ENCODE measurements at regions of chr2 and their contacts with region 1.

Region 1: DNA sequence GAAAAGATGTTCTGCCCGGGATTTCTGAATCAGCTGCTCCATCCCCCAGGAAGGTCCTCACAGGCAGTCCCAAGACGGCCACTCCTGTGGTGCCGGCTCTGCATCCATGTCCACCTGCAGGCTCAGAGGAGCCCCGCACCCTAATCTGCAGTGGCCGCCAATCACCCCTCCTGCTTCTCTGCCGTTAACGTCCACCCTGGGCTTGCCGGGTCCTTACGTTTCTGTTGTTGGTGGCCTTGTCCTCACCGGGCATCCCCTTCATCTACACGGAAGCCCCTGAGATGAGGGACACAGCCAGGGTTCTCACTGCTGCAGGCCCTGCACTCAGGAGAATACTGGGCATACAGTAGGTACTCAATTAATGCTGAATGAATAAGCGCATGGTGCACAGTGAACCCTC is 131.5 kb upstream of the SNTG2 start:
- DNase-seq: no peak
- ATAC-seq: no peak
- H3K4me3 ChIP-seq: no peak overlapping the region
- H3K4me3 Mint-ChIP-seq: no peak overlapping the region
- H3K27ac ChIP-seq: no peak overlapping the region
- H3K27ac Mint-ChIP-seq: no peak overlapping the region
- H3K4me1 ChIP-seq: no peaks in the 10 kb centered on the region
- H3K4me1 Mint-ChIP-seq: no peaks in the 10 kb centered on the region
- H3K27me3 ChIP-seq: no peaks in the 10 kb centered on the region
- H3K27me3 Mint-ChIP-seq: peaks cover 3% of the 10 kb centered on the region
- CTCF ChIP-seq: no peak

Region 2: GRCh38 chr2:842151-842803 is 23.2 kb after region 1 on chr2:
- CTCF ChIA-PET with region 1: no interaction called
- POLR2A ChIA-PET with region 1: no interaction called
- intact Hi-C with region 1: no loop called
- DNase-seq: no peak
- ATAC-seq: no peak
- H3K4me3 ChIP-seq: no peak overlapping the region
- H3K4me3 Mint-ChIP-seq: no peak overlapping the region
- H3K27ac ChIP-seq: no peak overlapping the region
- H3K27ac Mint-ChIP-seq: no peak overlapping the region
- H3K4me1 ChIP-seq: no peaks in the 10 kb centered on the region
- H3K4me1 Mint-ChIP-seq: no peaks in the 10 kb centered on the region
- H3K27me3 ChIP-seq: no peaks in the 10 kb centered on the region
- H3K27me3 Mint-ChIP-seq: peaks cover 27% of the 10 kb centered on the region
- CTCF ChIP-seq: no peak

Region 3: GRCh38 chr2:854460-854859 is 35.3 kb after region 1 on chr2:
- CTCF ChIA-PET with region 1: no interaction called
- POLR2A ChIA-PET with region 1: no interaction called
- intact Hi-C with region 1: loop called in 1 of 2 experiments (anchors 1 kb)
- DNase-seq: peak in 3 of 9 experiments; percentile 36 to 58 (median 58)
- ATAC-seq: no peak
- H3K4me3 ChIP-seq: no peak overlapping the region
- H3K4me3 Mint-ChIP-seq: no peak overlapping the region
- H3K27ac ChIP-seq: no peak overlapping the region
- H3K27ac Mint-ChIP-seq: no peak overlapping the region
- H3K4me1 ChIP-seq: peaks cover 10% of the 10 kb centered on the region
- H3K4me1 Mint-ChIP-seq: peaks cover 19% of the 10 kb centered on the region
- H3K27me3 ChIP-seq: no peaks in the 10 kb centered on the region
- H3K27me3 Mint-ChIP-seq: no peaks in the 10 kb centered on the region
- CTCF ChIP-seq: no peak

Region 4: GRCh38 chr2:964562-964961 is 145.4 kb after region 1 on chr2:
- CTCF ChIA-PET with region 1: no interaction called
- POLR2A ChIA-PET with region 1: no interaction called
- intact Hi-C with region 1: no loop called
- DNase-seq: no peak
- ATAC-seq: no peak
- H3K4me3 ChIP-seq: no peak overlapping the region
- H3K4me3 Mint-ChIP-seq: no peak overlapping the region
- H3K27ac ChIP-seq: no peak overlapping the region
- H3K27ac Mint-ChIP-seq: no peak overlapping the region
- H3K4me1 ChIP-seq: no peaks in the 10 kb centered on the region
- H3K4me1 Mint-ChIP-seq: peaks cover 2% of the 10 kb centered on the region
- H3K27me3 ChIP-seq: no peaks in the 10 kb centered on the region
- H3K27me3 Mint-ChIP-seq: no peaks in the 10 kb centered on the region
- CTCF ChIP-seq: no peak

Region 5: GRCh38 chr2:2031101-2031500 is 1212.0 kb after region 1 on chr2:
- CTCF ChIA-PET with region 1: no interaction called
- POLR2A ChIA-PET with region 1: no interaction called
- intact Hi-C with region 1: no loop called
- DNase-seq: no peak
- ATAC-seq: no peak
- H3K4me3 ChIP-seq: no peak overlapping the region
- H3K4me3 Mint-ChIP-seq: no peak overlapping the region
- H3K27ac ChIP-seq: no peak overlapping the region
- H3K27ac Mint-ChIP-seq: no peak overlapping the region
- H3K4me1 ChIP-seq: no peaks in the 10 kb centered on the region
- H3K4me1 Mint-ChIP-seq: no peaks in the 10 kb centered on the region
- H3K27me3 ChIP-seq: no peaks in the 10 kb centered on the region
- H3K27me3 Mint-ChIP-seq: no peaks in the 10 kb centered on the region
- CTCF ChIP-seq: no peak

Measured in CD8-positive, alpha-beta T cell (primary cell).